Activated CD8-positive, alpha-beta T cell treated with anti-CD3 and anti-CD28 coated beads for 36 hours (primary cell): ENCODE measurements at regions of chr17 and their contacts with region 1.

Region 1: GRCh38 chr17:27879987-27880608 is 13.1 kb downstream of the LYRM9 start:
- DNase-seq: peak; percentile 83
- ATAC-seq: peak; percentile 87
- H3K4me3 Mint-ChIP-seq: no peak overlapping the region
- H3K27ac Mint-ChIP-seq: peak overlapping the region; percentile 55
- H3K4me1 Mint-ChIP-seq: peaks cover 19% of the 10 kb centered on the region
- H3K27me3 Mint-ChIP-seq: no peaks in the 10 kb centered on the region
- CTCF ChIP-seq: peak; percentile 86

Region 2: DNA sequence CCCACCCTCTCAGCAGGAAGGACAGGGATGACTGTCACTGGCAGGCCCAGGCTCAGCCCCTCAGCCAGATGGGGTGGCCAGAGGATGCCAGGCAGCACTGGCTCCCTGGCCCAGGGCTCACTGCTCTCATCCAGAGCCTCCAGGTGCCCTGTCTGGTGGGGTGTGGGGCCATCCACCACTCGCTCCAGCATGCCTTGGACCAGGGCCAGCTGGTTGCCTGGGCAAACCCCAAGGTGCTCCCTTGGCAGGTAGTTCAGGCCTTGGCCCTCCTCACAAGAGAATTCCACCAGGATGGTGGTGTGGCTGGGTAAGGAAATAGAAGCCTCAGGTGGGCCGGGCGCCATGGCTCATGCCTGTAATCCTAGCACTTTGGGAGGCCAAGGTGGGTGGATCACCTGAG is 219.7 kb before region 1 on chr17:
- CTCF ChIA-PET with region 1: interaction called, 4 read pairs
- POLR2A ChIA-PET with region 1: no interaction called
- intact Hi-C with region 1: loop called (anchors 5 kb)
- DNase-seq: no peak
- ATAC-seq: no peak
- H3K4me3 Mint-ChIP-seq: no peak overlapping the region
- H3K27ac Mint-ChIP-seq: no peak overlapping the region
- H3K4me1 Mint-ChIP-seq: no peaks in the 10 kb centered on the region
- H3K27me3 Mint-ChIP-seq: no peaks in the 10 kb centered on the region
- CTCF ChIP-seq: no peak

Region 3: GRCh38 chr17:27780092-27780827 is 99.8 kb before region 1 on chr17:
- CTCF ChIA-PET with region 1: interaction called, 12 read pairs
- POLR2A ChIA-PET with region 1: no interaction called
- intact Hi-C with region 1: no loop called
- DNase-seq: no peak
- ATAC-seq: no peak
- H3K4me3 Mint-ChIP-seq: no peak overlapping the region
- H3K27ac Mint-ChIP-seq: no peak overlapping the region
- H3K4me1 Mint-ChIP-seq: no peaks in the 10 kb centered on the region
- H3K27me3 Mint-ChIP-seq: no peaks in the 10 kb centered on the region
- CTCF ChIP-seq: no peak

Region 4: DNA sequence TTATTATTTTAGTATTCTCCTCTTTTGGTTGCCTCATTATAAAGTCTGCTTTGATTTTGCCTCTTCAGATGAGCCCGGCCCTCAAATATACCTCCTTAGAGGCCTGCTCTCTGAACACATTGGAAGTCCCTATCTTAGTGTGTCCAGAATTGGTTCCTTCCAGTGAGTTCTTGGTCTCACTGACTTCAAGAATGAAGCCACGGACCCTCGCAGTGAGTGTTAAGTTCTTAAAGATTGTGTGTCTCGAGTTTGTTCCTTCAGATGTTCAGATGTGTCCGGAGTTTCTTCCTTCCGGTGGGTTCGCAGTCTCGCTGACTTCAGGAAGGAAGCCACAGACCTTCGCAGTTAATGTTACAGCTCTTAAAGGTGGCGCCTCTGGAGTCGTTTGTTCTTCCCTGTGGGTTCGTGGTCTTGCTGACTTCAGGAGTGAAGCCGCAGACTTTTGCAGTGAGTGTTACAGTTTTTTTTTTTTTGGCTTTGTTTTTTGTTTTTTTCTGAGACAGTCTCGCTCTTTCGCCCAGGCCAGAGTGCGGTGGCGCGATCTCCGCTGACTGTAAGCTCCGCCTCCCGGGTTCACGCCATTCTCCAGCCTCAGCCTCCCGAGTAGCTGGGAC is 33.9 kb before region 1 on chr17:
- CTCF ChIA-PET with region 1: interaction called, 13 read pairs
- POLR2A ChIA-PET with region 1: interaction called, 3 read pairs
- intact Hi-C with region 1: no loop called
- DNase-seq: peak; percentile 48
- ATAC-seq: peak; percentile 79
- H3K4me3 Mint-ChIP-seq: peak overlapping the region; percentile 63
- H3K27ac Mint-ChIP-seq: peak overlapping the region; percentile 84
- H3K4me1 Mint-ChIP-seq: peaks cover 20% of the 10 kb centered on the region
- H3K27me3 Mint-ChIP-seq: no peaks in the 10 kb centered on the region
- CTCF ChIP-seq: no peak

Region 5: DNA sequence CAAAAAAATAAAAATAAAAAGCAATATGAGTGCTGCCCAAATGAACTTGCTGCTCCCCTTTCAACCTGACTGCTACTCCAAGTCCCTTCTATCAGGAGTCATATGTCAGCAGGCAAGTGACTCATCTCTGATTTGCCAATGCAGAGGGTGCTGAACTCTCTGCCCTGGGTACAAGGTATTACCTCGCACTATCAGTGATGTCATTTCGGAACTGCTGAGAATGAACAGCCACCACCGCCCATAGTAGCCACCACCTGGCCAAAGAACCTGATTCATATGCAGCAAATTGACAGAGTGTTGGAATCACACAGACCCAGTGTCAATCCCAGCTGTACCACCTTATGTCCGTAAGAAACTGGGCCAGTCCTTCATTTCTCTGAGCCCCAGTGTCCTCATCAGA is 18.1 kb before region 1 on chr17:
- CTCF ChIA-PET with region 1: interaction called, 13 read pairs
- POLR2A ChIA-PET with region 1: no interaction called
- intact Hi-C with region 1: no loop called
- DNase-seq: peak; percentile 14
- ATAC-seq: peak; percentile 75
- H3K4me3 Mint-ChIP-seq: no peak overlapping the region
- H3K27ac Mint-ChIP-seq: no peak overlapping the region
- H3K4me1 Mint-ChIP-seq: peaks cover 13% of the 10 kb centered on the region
- H3K27me3 Mint-ChIP-seq: no peaks in the 10 kb centered on the region
- CTCF ChIP-seq: no peak

Region 6: DNA sequence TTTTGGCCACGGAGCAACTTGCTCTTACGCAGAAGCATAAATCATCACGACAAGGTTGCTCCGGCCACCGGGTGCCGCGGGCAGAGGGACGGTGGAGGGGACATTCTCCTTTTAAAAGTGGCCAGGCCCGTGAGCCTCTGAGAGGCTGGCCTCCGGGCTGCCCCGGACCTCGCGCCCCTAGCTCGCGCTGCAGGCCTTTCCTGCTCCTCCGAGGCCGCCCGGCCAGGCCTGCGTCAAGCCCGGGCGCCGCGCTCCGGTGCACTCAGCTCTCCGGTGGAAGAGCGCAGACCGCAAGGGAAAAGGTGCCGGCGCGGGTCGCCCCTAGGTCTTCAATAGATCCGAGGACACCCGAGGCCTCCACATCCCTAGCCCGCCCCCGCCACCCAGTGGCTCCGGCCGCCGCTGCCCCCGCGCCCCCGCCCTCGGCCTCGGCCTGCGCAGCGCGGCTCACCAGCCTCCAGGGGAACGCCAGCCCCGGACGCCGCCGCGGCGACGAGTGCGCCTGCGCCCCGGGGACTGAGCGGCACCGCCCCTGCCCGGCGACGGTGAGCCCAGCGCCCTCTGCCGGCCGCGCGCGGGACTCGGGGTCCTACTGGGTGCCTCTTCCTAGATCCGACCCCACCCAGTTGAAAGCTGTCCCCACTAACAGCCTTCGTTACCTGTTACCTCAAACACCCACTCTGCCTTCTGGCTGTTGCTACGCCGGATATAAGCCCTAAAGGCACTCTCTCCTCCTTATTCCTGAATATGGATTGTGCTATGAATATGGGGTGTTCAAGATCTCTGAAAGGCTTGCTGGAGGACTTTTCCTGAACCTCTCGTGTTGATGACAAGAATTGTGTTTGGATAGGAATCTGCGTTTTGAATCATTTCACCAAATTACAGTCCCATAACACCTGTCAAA is 13.0 kb after region 1 on chr17 and contains the start of gene LYRM9:
- CTCF ChIA-PET with region 1: interaction called, 92 read pairs
- POLR2A ChIA-PET with region 1: interaction called, 3 read pairs
- intact Hi-C with region 1: no loop called
- DNase-seq: peak; percentile 94
- ATAC-seq: peak; percentile 99
- H3K4me3 Mint-ChIP-seq: peak within 1 kb of the TSS; percentile 75
- H3K27ac Mint-ChIP-seq: no peak within 1 kb of the TSS
- H3K4me1 Mint-ChIP-seq: peaks cover 20% of the 10 kb centered on the region
- H3K27me3 Mint-ChIP-seq: peaks cover 15% of the 10 kb centered on the region
- CTCF ChIP-seq: peak; percentile 96
- total RNA-seq, gene LYRM9: 3.1 to 3.5 TPM

Region 7: GRCh38 chr17:27956601-27957445 is 76.7 kb after region 1 on chr17:
- CTCF ChIA-PET with region 1: no interaction called
- POLR2A ChIA-PET with region 1: no interaction called
- intact Hi-C with region 1: no loop called
- DNase-seq: no peak
- ATAC-seq: no peak
- H3K4me3 Mint-ChIP-seq: no peak overlapping the region
- H3K27ac Mint-ChIP-seq: no peak overlapping the region
- H3K4me1 Mint-ChIP-seq: no peaks in the 10 kb centered on the region
- H3K27me3 Mint-ChIP-seq: peaks cover 3% of the 10 kb centered on the region
- CTCF ChIP-seq: no peak